ENCODE measurements at regions of chr6 and their contacts with region 1.

Region 1: GRCh38 chr6:135909737-135910387 is 58.4 kb downstream of the PDE7B start:
- DNase-seq: peak; percentile 57 to 73 (median 71)
- H3K4me3 ChIP-seq: no peak overlapping the region
- H3K4me3 Mint-ChIP-seq: no peak overlapping the region
- H3K27ac ChIP-seq: no peak overlapping the region
- H3K27ac Mint-ChIP-seq: no peak overlapping the region
- H3K4me1 ChIP-seq: no peaks in the 10 kb centered on the region
- H3K4me1 Mint-ChIP-seq: peaks cover 2 to 5% (median 4%) of the 10 kb centered on the region in 4 donors
- H3K27me3 ChIP-seq: no peaks in the 10 kb centered on the region
- H3K27me3 Mint-ChIP-seq: no peaks in the 10 kb centered on the region

Region 2: GRCh38 chr6:135451693-135452092 is 458.2 kb before region 1 on chr6:
- CTCF ChIA-PET with region 1: interaction called, 10 read pairs
- POLR2A ChIA-PET with region 1: no interaction called
- intact Hi-C with region 1: loop called (anchors 1 kb)
- DNase-seq: peak in 4 of 5 donors; percentile 33 to 51 (median 42)
- H3K4me3 ChIP-seq: no peak overlapping the region
- H3K4me3 Mint-ChIP-seq: no peak overlapping the region
- H3K27ac ChIP-seq: no peak overlapping the region
- H3K27ac Mint-ChIP-seq: no peak overlapping the region
- H3K4me1 ChIP-seq: no peaks in the 10 kb centered on the region
- H3K4me1 Mint-ChIP-seq: no peaks in the 10 kb centered on the region
- H3K27me3 ChIP-seq: no peaks in the 10 kb centered on the region
- H3K27me3 Mint-ChIP-seq: no peaks in the 10 kb centered on the region

Region 3: DNA sequence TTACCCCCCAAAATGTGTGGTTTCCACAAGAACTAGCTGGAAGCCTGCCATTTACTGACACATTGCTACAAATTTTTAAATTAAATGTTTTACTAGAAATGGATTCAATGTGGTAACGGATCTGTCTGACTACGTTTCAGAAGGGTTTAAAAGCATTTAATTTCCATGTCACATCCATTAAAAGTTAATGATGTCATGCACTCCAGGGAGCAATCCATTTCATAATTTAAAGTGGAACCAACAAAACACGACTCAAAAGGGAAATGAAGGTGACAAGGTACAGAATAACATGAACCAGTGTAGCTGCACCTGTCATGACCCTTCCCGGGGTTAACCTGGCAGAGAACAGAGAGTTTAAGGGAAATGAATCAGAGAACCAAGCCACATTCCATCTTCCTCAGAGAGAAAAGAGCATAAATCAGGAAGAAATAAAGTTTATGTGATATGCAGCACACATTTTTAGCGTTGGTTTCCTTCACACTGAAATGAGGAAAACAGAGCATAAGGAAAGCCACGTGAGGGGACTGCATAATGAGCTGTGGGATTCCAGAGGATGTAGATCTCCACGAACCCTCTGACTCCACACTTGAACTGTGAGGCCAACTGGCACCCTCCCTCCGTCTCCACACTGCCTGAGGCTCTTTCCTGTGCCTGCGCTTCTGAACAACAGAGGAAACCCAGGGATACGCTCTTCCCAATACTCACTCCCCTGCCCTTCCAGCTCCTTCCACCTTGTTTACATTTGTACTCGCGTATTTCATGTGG is 242.0 kb before region 1 on chr6:
- CTCF ChIA-PET with region 1: interaction called, 83 read pairs
- POLR2A ChIA-PET with region 1: no interaction called
- intact Hi-C with region 1: no loop called
- DNase-seq: no peak
- H3K4me3 ChIP-seq: no peak overlapping the region
- H3K4me3 Mint-ChIP-seq: no peak overlapping the region
- H3K27ac ChIP-seq: no peak overlapping the region
- H3K27ac Mint-ChIP-seq: no peak overlapping the region
- H3K4me1 ChIP-seq: no peaks in the 10 kb centered on the region
- H3K4me1 Mint-ChIP-seq: no peaks in the 10 kb centered on the region
- H3K27me3 ChIP-seq: no peaks in the 10 kb centered on the region
- H3K27me3 Mint-ChIP-seq: peaks cover 7 to 10% of the 10 kb centered on the region in 2 donors

Region 4: GRCh38 chr6:135743476-135743875 is 166.4 kb before region 1 on chr6:
- CTCF ChIA-PET with region 1: interaction called, 4 read pairs
- POLR2A ChIA-PET with region 1: no interaction called
- intact Hi-C with region 1: loop called (anchors 5 kb)
- DNase-seq: no peak
- H3K4me3 ChIP-seq: no peak overlapping the region
- H3K4me3 Mint-ChIP-seq: no peak overlapping the region
- H3K27ac ChIP-seq: no peak overlapping the region
- H3K27ac Mint-ChIP-seq: no peak overlapping the region
- H3K4me1 ChIP-seq: no peaks in the 10 kb centered on the region
- H3K4me1 Mint-ChIP-seq: peaks cover 0 to 2% (median under 1%) of the 10 kb centered on the region in 4 donors
- H3K27me3 ChIP-seq: no peaks in the 10 kb centered on the region
- H3K27me3 Mint-ChIP-seq: peaks cover 0 to 4% of the 10 kb centered on the region in 2 donors

Region 5: DNA sequence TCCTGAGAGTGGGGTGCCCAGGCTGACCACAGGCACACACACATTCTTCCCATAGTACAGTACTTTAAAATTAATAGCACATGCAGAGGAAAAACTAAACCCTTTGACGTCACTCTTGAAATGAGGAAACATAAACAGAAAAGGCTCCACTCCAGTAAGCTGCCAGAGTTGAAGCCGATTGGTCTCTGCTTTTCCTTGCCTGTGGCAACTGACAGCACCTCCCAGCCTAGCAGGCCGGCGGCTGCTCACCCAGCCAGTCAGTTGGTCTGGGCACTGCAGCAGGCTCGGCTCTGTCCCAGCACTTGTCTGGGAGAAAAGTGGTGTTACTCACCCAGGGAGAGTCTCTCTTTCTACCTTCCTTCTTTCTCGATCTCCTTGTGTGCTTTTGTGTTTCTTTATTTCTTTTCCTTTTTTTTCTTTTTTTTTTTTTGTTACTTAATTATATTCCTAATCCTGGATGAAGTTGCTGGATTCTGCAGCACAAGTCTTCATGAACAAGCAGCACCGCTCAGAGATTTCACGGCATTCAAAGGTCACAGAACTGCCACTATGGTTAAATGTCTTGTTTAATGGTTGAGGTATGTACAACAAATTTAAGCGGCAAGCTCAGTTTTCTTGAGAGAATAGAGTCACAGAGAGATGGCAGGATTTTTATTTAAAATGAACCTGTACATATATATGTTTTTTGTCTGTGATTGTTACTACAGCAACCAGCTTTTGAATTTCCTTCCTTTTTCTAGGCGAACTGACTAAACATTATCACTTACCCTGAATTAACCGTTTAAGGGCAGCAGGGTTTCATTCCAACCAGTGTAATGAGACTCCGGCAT is 58.2 kb before region 1 on chr6 and contains the start of gene PDE7B:
- CTCF ChIA-PET with region 1: interaction called, 27 read pairs
- POLR2A ChIA-PET with region 1: no interaction called
- intact Hi-C with region 1: no loop called
- DNase-seq: peak; percentile 12 to 46 (median 23)
- H3K4me3 ChIP-seq: no peak within 1 kb of the TSS
- H3K4me3 Mint-ChIP-seq: peak within 1 kb of the TSS; percentile 68 to 85 (median 78)
- H3K27ac ChIP-seq: no peak within 1 kb of the TSS
- H3K27ac Mint-ChIP-seq: peak within 1 kb of the TSS in 6 of 7 donors; percentile 44 to 77 (median 63)
- H3K4me1 ChIP-seq: peaks cover 16% of the 10 kb centered on the region
- H3K4me1 Mint-ChIP-seq: peaks cover 5 to 7% (median 6%) of the 10 kb centered on the region in 4 donors
- H3K27me3 ChIP-seq: no peaks in the 10 kb centered on the region
- H3K27me3 Mint-ChIP-seq: peaks cover 0 to 1% of the 10 kb centered on the region in 2 donors
- total RNA-seq, gene PDE7B: 0.49 to 0.94 TPM

Region 6: DNA sequence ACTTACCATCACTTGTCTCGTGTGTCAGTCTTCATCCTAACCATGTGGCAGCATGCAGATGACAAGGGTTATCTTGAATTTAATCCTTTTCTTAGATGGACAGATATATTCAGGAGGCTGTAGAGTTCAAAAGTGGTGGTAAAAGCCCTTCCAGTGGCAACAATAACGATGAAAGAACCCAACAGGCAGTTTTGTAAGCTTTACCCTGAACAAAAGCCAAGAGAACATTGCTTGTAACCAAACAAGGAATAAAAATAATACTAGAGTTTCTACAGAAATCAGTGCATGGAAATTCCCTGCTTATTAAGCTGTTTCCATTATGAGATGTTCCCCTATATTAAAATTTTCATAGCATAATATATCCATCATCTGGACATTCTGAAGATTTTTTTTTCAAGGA is 11.3 kb after region 1 on chr6:
- CTCF ChIA-PET with region 1: interaction called, 12 read pairs
- POLR2A ChIA-PET with region 1: no interaction called
- intact Hi-C with region 1: no loop called
- DNase-seq: no peak
- H3K4me3 ChIP-seq: no peak overlapping the region
- H3K4me3 Mint-ChIP-seq: no peak overlapping the region
- H3K27ac ChIP-seq: no peak overlapping the region
- H3K27ac Mint-ChIP-seq: no peak overlapping the region
- H3K4me1 ChIP-seq: no peaks in the 10 kb centered on the region
- H3K4me1 Mint-ChIP-seq: no peaks in the 10 kb centered on the region
- H3K27me3 ChIP-seq: no peaks in the 10 kb centered on the region
- H3K27me3 Mint-ChIP-seq: peaks cover 4 to 6% of the 10 kb centered on the region in 2 donors

Region 7: DNA sequence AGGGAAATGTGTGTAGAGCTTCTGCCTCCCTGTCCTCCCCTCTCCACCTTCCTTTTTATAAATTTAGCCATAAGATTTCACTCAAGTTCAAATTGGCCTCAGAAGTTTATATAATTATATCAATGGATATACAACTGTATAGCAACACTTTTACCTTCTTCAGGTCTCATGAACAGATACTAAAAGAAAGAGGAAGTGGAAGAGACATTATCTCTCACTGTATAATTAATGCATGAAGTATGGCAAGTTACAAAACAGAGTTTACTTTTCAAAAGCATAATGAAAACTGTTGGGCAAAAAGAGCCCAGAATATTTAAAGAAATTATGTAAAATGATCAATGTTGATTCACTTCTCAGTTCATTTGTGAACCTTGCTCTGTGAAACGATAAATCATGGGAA is 41.3 kb after region 1 on chr6:
- CTCF ChIA-PET with region 1: no interaction called
- POLR2A ChIA-PET with region 1: no interaction called
- intact Hi-C with region 1: no loop called
- DNase-seq: no peak
- H3K4me3 ChIP-seq: no peak overlapping the region
- H3K4me3 Mint-ChIP-seq: no peak overlapping the region
- H3K27ac ChIP-seq: no peak overlapping the region
- H3K27ac Mint-ChIP-seq: no peak overlapping the region
- H3K4me1 ChIP-seq: no peaks in the 10 kb centered on the region
- H3K4me1 Mint-ChIP-seq: no peaks in the 10 kb centered on the region
- H3K27me3 ChIP-seq: no peaks in the 10 kb centered on the region
- H3K27me3 Mint-ChIP-seq: peaks cover 0 to 2% of the 10 kb centered on the region in 2 donors

Measured in CD4-positive, alpha-beta memory T cell (primary cell).